Gastrocnemius medialis (tissue), 4 donors: ENCODE measurements at regions of chr19 and their contacts with region 1.

Region 1: GRCh38 chr19:49866933-49867782 is at the start of gene PNKP:
- DNase-seq: peak; percentile 83 to 84
- ATAC-seq: peak; percentile 66 to 69
- H3K4me3 ChIP-seq: peak within 1 kb of the TSS; percentile 73 to 99 (median 88)
- H3K27ac ChIP-seq: peak within 1 kb of the TSS; percentile 96 to 99 (median 98)
- H3K4me1 ChIP-seq: peaks cover 45 to 47% of the 10 kb centered on the region in 2 donors
- H3K27me3 ChIP-seq: no peaks in the 10 kb centered on the region
- CTCF ChIP-seq: no peak
- POLR2A ChIP-seq: peak; percentile 69 to 72
- total RNA-seq, gene PNKP: 14.9 to 43.4 (median 21.1) TPM

Region 2: GRCh38 chr19:49827034-49827433 is 40.1 kb before region 1 on chr19:
- in situ Hi-C with region 1: no loop called
- intact Hi-C with region 1: no loop called
- DNase-seq: no peak
- ATAC-seq: no peak
- H3K4me3 ChIP-seq: no peak overlapping the region
- H3K27ac ChIP-seq: peak overlapping the region in 3 of 4 donors; percentile 94 to 96 (median 95)
- H3K4me1 ChIP-seq: peaks cover 12 to 37% of the 10 kb centered on the region in 2 donors
- H3K27me3 ChIP-seq: no peaks in the 10 kb centered on the region
- CTCF ChIP-seq: no peak
- POLR2A ChIP-seq: no peak

Region 3: DNA sequence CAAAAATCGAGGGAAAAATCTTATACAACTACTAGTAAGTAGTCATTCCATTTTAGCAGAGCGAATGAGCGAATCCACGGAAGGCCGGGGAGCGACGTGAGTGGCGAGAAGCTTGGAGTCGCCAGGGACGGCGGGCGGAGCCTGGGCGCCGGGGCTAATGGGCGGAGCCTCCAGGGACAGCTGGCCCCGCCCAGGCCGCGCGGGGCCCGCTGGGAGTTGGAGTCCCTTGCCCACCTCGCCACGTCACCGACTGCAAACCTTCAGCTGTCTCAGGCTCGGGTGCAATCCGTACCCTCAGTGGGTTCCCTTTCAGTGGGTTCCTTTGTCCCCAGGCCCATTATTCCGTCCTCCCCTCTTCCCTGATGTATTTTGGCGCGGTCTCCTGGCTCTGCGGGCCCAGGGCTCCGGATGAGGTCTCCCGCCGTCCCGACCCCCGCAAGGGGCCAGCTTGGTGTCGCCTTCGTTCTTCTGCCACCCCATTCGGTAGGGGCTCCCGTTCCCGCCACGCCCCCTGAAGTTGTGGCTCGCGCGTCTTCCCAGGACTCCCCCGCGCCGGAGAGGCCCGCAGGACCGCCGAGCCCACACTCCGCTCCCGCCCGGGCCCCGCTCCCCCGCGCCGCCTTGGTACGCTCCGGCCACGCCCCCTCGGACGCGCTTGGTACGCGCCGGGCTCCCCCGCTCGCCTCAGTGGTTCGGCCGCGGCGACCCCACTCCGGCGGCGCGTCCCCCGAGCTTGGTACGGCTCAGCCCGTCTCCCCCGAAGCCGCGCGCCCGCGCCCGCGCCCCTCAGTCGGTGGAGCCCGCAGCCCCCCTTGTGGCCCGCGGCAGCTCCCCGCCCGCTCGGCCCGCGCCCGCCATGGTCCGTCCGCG is 16.4 kb before region 1 on chr19 and contains the start of gene PTOV1:
- in situ Hi-C with region 1: no loop called
- intact Hi-C with region 1: loop called (anchors 2 kb)
- DNase-seq: peak; percentile 88 to 92
- ATAC-seq: peak; percentile 89
- H3K4me3 ChIP-seq: peak within 1 kb of the TSS; percentile 73 to 79 (median 74)
- H3K27ac ChIP-seq: peak within 1 kb of the TSS; percentile 94 to 99 (median 97)
- H3K4me1 ChIP-seq: peaks cover 24 to 29% of the 10 kb centered on the region in 2 donors
- H3K27me3 ChIP-seq: no peaks in the 10 kb centered on the region
- CTCF ChIP-seq: peak in 1 of 5 experiments; percentile 11
- POLR2A ChIP-seq: peak; percentile 87 to 91
- total RNA-seq, gene PTOV1: 77.6 to 88.2 (median 87.0) TPM

Region 4: GRCh38 chr19:49953416-49953815 is 86.3 kb after region 1 on chr19:
- in situ Hi-C with region 1: no loop called
- intact Hi-C with region 1: no loop called
- DNase-seq: no peak
- ATAC-seq: no peak
- H3K4me3 ChIP-seq: no peak overlapping the region
- H3K27ac ChIP-seq: no peak overlapping the region
- H3K4me1 ChIP-seq: no peaks in the 10 kb centered on the region
- H3K27me3 ChIP-seq: peaks cover 0 to 7% (median 0%) of the 10 kb centered on the region in 3 donors
- CTCF ChIP-seq: no peak
- POLR2A ChIP-seq: no peak